ENCODE measurements at regions of chr2 and their contacts with region 1.

Region 1: GRCh38 chr2:186641807-186642321 is 52.0 kb upstream of the FAM171B start:
- DNase-seq: peak in 1 of 2 donors; percentile 45
- ATAC-seq: peak; percentile 75 to 94 (median 84)
- H3K4me3 ChIP-seq: no peak overlapping the region
- H3K27ac ChIP-seq: peak overlapping the region in 1 of 10 donors; percentile 41
- H3K4me1 ChIP-seq: peaks cover 0 to 23% (median 0%) of the 10 kb centered on the region in 9 donors
- H3K27me3 ChIP-seq: no peaks in the 10 kb centered on the region
- CTCF ChIP-seq: peak; percentile 46 to 85 (median 75)

Region 2: GRCh38 chr2:186503848-186504606 is 137.8 kb before region 1 on chr2:
- intact Hi-C with region 1: loop called in 9 of 10 experiments (anchors 1 to 5 kb)
- DNase-seq: no peak
- ATAC-seq: peak in 1 of 8 donors; percentile 44
- H3K4me3 ChIP-seq: no peak overlapping the region
- H3K27ac ChIP-seq: no peak overlapping the region
- H3K4me1 ChIP-seq: peaks cover 0 to 6% (median 0%) of the 10 kb centered on the region in 9 donors
- H3K27me3 ChIP-seq: no peaks in the 10 kb centered on the region
- CTCF ChIP-seq: peak; percentile 59 to 79 (median 66)

Region 3: DNA sequence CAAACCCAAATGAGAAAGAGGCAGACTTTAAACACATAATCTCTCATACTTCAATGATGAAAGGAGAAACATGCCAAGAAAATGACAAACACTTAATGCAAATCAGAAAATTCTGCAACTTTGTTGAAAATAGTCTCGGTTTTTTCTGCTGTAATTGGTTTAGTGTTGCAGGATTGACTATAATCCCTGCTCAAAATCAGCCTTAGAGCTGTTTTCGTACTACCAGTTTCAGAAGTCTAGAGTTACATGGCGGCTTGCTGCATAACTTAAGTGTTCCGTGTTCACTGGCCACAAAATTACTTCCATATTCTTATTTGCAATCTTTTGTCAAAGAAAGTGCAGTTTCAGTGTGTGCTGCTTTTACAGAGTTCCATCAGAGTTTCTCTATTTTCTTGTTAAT is 100.9 kb before region 1 on chr2:
- intact Hi-C with region 1: no loop called
- DNase-seq: no peak
- ATAC-seq: no peak
- H3K4me3 ChIP-seq: no peak overlapping the region
- H3K27ac ChIP-seq: no peak overlapping the region
- H3K4me1 ChIP-seq: peaks cover 0 to 28% (median 9%) of the 10 kb centered on the region in 9 donors
- H3K27me3 ChIP-seq: no peaks in the 10 kb centered on the region
- CTCF ChIP-seq: no peak

Region 4: GRCh38 chr2:186687807-186688211 is 45.9 kb after region 1 on chr2:
- intact Hi-C with region 1: no loop called
- DNase-seq: no peak
- ATAC-seq: no peak
- H3K4me3 ChIP-seq: no peak overlapping the region
- H3K27ac ChIP-seq: no peak overlapping the region
- H3K4me1 ChIP-seq: no peaks in the 10 kb centered on the region
- H3K27me3 ChIP-seq: no peaks in the 10 kb centered on the region
- CTCF ChIP-seq: no peak

Region 5: DNA sequence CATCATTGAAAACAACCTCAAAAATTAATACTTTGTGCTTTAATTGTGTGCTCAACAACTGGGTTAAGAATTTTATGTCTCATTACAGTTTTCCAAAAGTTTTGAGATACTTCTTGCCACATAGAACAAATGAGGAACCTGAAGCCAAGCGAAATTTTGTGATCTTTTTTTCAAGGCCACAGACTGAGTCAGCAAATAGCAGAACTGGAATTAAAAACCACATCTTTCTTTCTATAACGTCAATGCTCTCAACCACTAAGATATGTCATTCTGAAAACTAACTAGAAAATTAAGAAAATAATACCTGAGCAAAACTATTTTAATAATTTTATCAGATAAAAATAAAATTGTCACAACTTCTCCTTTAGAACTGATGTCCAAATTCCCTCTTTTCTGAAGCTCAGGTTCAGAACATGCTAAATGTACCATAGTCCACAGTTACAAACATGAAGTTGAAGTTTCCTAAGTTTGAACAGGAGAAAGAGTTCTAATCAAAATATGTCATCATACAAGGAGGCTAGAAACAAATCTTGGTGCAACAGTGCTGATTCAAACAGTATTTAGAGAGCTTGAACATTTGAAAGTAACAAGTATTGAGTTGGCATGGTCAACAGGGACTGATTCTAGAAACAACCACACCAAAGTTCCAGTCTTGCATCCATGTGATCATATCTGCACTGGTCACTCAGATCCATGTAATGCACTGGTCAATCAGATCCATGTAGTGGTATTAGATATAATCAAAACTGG is 833.8 kb after region 1 on chr2:
- intact Hi-C with region 1: no loop called
- DNase-seq: no peak
- ATAC-seq: no peak
- H3K4me3 ChIP-seq: no peak overlapping the region
- H3K27ac ChIP-seq: peak overlapping the region in 1 of 10 donors; percentile 56
- H3K4me1 ChIP-seq: peaks cover 0 to 16% (median 9%) of the 10 kb centered on the region in 9 donors
- H3K27me3 ChIP-seq: no peaks in the 10 kb centered on the region
- CTCF ChIP-seq: no peak

Measured in heart right ventricle (tissue), 16 donors.